ENCODE measurements at regions of chr19 and their contacts with region 1.

Region 1: DNA sequence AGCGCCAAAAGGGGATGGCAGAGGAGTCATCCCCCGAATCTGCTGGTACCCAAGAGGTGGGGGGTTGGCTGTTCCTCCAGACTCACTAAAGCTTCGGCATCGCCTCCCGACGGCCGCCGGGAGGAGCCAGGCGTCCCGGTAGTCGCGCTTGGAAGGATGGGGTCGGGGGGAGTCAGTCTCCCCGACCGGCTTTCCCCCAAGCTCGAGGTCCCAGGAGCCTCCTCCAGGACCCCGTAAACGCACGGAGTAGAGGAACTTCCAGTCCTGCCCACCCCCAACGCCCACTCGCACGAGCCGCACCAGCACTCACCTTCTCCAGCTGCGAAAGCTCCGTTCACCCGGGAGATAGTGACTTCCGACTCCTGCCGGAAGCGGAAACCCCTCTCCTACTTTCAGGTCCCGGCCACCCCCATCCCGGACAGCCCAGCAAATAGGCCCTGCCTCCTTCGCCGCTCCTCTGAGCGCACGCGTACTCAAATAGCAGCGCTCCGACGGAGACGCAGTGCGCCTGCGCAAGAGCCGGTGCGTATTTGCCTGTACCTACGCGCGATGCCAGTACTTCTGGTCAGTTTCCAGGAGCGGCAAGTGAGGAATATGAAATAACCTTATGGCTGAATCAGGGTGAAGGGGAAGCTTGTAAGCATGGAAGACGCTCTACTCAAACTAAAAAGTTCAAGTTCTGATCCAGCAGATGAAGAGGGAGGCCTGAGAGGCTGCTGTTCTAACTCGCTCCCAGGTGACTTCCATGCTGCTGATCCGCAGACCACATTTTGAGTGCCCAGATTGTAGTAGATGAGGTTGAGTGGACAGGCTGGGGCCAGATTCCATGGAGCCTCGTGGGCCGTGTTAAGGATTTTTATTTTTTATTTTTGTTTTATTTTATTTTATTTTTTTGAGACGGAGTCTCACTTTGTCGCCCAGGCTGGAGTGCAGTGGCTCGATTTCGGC is at the start of gene ELOF1:
- DNase-seq: peak; percentile 90 to 97 (median 94)
- ATAC-seq: peak; percentile 97
- H3K4me3 ChIP-seq: peak within 1 kb of the TSS; percentile 94
- H3K4me3 Mint-ChIP-seq: peak within 1 kb of the TSS; percentile 89 to 99 (median 96)
- H3K27ac ChIP-seq: peak within 1 kb of the TSS; percentile 82
- H3K27ac Mint-ChIP-seq: peak within 1 kb of the TSS; percentile 84 to 98 (median 95)
- H3K4me1 ChIP-seq: peaks cover 16 to 19% of the 10 kb centered on the region in 2 donors
- H3K4me1 Mint-ChIP-seq: peaks cover 34 to 58% (median 45%) of the 10 kb centered on the region in 7 donors
- H3K27me3 ChIP-seq: no peaks in the 10 kb centered on the region
- H3K27me3 Mint-ChIP-seq: no peaks in the 10 kb centered on the region
- total RNA-seq, gene ELOF1: 34.0 to 59.8 (median 41.9) TPM

Region 2: DNA sequence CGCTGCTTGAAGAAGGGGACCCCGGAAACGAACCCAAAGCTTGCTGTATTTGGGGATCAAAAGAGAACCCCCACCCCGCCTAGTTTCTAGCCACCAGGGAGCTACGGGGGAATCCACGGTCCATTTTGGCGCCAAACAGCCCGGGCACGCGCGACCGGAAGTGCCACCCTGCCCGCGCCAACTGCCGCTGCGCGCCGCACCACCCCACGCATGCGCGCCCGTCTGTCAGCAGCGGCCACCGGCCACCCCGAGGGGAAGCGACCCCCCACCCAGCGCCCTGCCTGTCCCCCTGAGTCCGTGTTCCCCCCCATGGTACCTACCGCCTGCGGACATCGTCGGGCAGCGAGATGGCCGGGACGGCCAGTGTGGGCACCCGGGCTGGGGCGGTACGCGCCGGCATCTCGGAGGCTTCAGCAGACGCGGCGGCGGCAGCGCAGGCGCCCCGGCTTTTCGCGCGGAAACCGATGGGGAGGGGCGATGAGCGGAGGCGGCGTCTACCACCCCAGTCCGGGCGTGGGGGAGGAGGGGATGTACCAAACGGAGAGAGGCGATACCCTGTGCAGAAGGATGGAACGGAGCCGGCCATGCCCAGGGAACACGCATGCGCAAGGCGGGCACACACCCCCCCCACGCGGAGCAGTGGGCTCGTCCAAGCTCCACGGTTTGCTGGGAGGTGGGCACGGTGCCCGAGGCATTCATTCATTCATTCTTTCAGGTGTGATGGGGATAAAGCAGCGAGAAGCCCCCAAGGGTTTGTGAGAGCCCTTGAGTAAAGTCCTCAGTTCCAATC is 1364.5 kb before region 1 on chr19 and contains the start of gene DNMT1:
- CTCF ChIA-PET with region 1: no interaction called
- POLR2A ChIA-PET with region 1: no interaction called
- intact Hi-C with region 1: loop called in 1 of 2 experiments (anchors 5 kb)
- DNase-seq: peak; percentile 87 to 98 (median 93)
- ATAC-seq: peak; percentile 99
- H3K4me3 ChIP-seq: peak within 1 kb of the TSS; percentile 88
- H3K4me3 Mint-ChIP-seq: peak within 1 kb of the TSS; percentile 87 to 98 (median 95)
- H3K27ac ChIP-seq: peak within 1 kb of the TSS; percentile 81
- H3K27ac Mint-ChIP-seq: peak within 1 kb of the TSS; percentile 82 to 96 (median 92)
- H3K4me1 ChIP-seq: peaks cover 7 to 20% of the 10 kb centered on the region in 2 donors
- H3K4me1 Mint-ChIP-seq: peaks cover 14 to 48% (median 40%) of the 10 kb centered on the region in 7 donors
- H3K27me3 ChIP-seq: no peaks in the 10 kb centered on the region
- H3K27me3 Mint-ChIP-seq: no peaks in the 10 kb centered on the region
- total RNA-seq, gene DNMT1: 175 to 334 (median 194) TPM

Region 3: DNA sequence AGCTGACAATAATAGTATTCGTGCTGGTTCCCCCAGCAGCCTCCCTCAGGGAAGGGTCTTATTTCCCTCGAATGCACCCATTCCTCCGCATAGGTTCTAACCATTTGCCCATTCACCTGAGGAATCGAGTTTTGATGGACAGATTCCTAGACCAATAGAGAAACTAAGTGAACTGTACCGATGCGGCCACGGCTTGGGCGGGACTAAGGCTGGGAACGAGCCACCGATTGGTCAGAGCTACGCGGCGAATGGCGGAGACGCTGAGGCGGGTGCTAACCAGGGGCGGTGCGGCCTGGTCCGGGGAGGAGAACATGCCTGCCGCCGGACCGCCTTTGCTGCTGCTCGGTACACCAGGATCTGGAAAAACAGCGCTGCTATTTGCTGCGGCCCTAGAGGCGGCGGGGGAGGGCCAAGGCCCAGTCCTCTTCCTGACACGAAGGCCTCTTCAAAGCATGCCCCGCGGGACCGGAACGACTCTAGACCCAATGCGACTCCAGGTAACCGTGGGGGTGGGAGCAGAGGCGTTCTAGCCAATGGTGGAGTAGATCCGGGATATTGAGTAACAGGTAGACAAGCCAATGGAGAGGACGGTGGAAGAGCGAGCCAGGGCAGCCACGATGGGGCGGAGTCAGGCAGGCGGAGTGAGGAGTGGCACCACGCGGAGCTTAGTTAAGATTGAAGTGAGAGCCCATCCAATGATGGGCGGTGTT is 184.6 kb before region 1 on chr19 and contains the start of gene SWSAP1:
- CTCF ChIA-PET with region 1: no interaction called
- POLR2A ChIA-PET with region 1: interaction called, 5 read pairs
- intact Hi-C with region 1: loop called in 1 of 2 experiments (anchors 1 kb)
- DNase-seq: peak; percentile 87 to 99 (median 99)
- ATAC-seq: peak; percentile 94
- H3K4me3 ChIP-seq: peak within 1 kb of the TSS; percentile 92
- H3K4me3 Mint-ChIP-seq: peak within 1 kb of the TSS in 3 of 10 donors; percentile 31 to 56 (median 45)
- H3K27ac ChIP-seq: peak within 1 kb of the TSS; percentile 92
- H3K27ac Mint-ChIP-seq: peak within 1 kb of the TSS in 1 of 9 donors; percentile 22
- H3K4me1 ChIP-seq: peaks cover 21 to 30% of the 10 kb centered on the region in 2 donors
- H3K4me1 Mint-ChIP-seq: peaks cover 12 to 40% (median 28%) of the 10 kb centered on the region in 7 donors
- H3K27me3 ChIP-seq: no peaks in the 10 kb centered on the region
- H3K27me3 Mint-ChIP-seq: no peaks in the 10 kb centered on the region
- total RNA-seq, gene SWSAP1: 3.4 to 4.2 (median 4.0) TPM

Region 4: DNA sequence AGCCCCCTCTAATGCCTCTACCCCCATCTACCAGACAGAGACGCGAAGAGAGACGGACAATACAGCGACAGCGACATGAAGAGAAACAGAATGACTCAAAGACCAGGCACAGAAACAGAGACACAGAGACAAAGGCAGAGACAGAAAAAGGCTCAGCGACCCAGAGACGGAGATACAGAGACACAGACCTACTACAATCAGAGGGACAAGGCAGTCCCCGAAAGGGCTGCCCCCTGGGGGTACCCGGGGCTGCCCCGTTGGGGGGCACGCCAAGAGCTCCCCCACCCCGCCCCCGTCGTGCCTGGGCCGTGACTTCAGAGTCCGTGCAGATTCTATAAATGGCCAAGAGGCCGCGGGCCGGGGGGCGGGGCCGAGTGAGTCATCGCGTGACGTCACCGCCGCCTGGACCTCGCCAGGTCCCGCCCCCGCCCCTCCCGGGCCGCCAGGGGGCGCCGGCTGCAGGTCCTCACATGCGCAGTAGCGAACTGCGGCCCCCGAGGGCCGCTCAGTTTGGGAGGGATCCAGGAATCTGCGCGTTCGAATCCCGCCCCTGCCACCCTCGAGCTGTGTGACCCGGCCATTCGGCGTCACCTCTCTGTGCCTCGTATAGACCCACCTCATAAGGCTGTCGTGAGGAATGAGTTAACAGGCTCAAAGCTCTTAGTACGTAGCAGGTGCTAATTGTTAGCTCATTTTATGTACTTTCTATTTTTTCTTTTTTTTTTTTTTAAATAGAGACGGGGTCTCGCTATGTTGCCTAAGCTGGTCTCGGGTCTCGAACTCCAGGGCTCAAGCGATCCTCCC is 23.2 kb before region 1 on chr19:
- CTCF ChIA-PET with region 1: interaction called, 5 read pairs
- POLR2A ChIA-PET with region 1: interaction called, 3 read pairs
- intact Hi-C with region 1: loop called (anchors 1 kb)
- DNase-seq: peak; percentile 59 to 95 (median 68)
- ATAC-seq: peak; percentile 95
- H3K4me3 ChIP-seq: peak overlapping the region; percentile 52
- H3K4me3 Mint-ChIP-seq: peak overlapping the region; percentile 59 to 88 (median 74)
- H3K27ac ChIP-seq: peak overlapping the region; percentile 43
- H3K27ac Mint-ChIP-seq: peak overlapping the region in 8 of 9 donors; percentile 2 to 88 (median 60)
- H3K4me1 ChIP-seq: peaks cover 5% of the 10 kb centered on the region in 2 donors
- H3K4me1 Mint-ChIP-seq: peaks cover 12 to 22% (median 16%) of the 10 kb centered on the region in 7 donors
- H3K27me3 ChIP-seq: peaks cover 0 to 3% of the 10 kb centered on the region in 2 donors
- H3K27me3 Mint-ChIP-seq: peaks cover 11 to 36% (median 16%) of the 10 kb centered on the region in 5 donors

Region 5: DNA sequence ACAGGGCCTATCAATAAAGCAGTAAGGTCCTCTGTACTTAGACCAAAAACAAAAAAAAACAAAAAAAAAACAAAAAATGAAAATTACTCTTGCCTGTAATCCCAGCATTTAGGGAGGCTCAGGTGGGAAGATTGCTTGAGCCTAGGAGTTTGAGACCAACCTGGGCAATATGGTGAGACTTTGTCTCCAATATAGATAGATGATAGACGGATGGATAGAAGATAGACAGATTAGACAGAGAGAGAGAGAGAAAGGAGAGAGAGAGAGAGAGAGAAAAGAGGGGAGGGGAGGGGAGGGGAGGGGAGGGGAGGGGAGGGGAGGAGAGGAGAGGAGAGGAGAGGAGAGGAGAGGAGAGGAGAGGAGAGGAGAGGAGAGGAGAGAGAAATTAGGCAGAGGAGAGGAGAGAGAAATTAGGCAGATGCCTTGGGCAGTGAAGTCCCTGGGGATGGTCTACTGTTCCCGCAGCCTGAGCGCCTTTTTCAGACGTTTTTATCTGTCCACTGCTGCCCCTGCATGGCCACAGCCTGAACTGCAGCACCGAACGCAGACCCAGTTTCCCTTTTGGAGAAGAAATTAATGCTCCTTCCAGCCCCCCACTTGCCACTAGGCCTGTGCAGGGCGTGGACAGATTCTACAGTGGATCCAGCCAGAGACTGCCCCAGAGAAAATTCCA is 28.3 kb after region 1 on chr19:
- CTCF ChIA-PET with region 1: interaction called, 9 read pairs
- POLR2A ChIA-PET with region 1: interaction called, 33 read pairs
- intact Hi-C with region 1: loop called (anchors 1 kb)
- DNase-seq: peak; percentile 58 to 80 (median 66)
- ATAC-seq: peak; percentile 95
- H3K4me3 ChIP-seq: no peak overlapping the region
- H3K4me3 Mint-ChIP-seq: no peak overlapping the region
- H3K27ac ChIP-seq: no peak overlapping the region
- H3K27ac Mint-ChIP-seq: peak overlapping the region in 1 of 9 donors; percentile 36
- H3K4me1 ChIP-seq: no peaks in the 10 kb centered on the region
- H3K4me1 Mint-ChIP-seq: peaks cover 0 to 16% (median 7%) of the 10 kb centered on the region in 7 donors
- H3K27me3 ChIP-seq: no peaks in the 10 kb centered on the region
- H3K27me3 Mint-ChIP-seq: no peaks in the 10 kb centered on the region

Region 6: DNA sequence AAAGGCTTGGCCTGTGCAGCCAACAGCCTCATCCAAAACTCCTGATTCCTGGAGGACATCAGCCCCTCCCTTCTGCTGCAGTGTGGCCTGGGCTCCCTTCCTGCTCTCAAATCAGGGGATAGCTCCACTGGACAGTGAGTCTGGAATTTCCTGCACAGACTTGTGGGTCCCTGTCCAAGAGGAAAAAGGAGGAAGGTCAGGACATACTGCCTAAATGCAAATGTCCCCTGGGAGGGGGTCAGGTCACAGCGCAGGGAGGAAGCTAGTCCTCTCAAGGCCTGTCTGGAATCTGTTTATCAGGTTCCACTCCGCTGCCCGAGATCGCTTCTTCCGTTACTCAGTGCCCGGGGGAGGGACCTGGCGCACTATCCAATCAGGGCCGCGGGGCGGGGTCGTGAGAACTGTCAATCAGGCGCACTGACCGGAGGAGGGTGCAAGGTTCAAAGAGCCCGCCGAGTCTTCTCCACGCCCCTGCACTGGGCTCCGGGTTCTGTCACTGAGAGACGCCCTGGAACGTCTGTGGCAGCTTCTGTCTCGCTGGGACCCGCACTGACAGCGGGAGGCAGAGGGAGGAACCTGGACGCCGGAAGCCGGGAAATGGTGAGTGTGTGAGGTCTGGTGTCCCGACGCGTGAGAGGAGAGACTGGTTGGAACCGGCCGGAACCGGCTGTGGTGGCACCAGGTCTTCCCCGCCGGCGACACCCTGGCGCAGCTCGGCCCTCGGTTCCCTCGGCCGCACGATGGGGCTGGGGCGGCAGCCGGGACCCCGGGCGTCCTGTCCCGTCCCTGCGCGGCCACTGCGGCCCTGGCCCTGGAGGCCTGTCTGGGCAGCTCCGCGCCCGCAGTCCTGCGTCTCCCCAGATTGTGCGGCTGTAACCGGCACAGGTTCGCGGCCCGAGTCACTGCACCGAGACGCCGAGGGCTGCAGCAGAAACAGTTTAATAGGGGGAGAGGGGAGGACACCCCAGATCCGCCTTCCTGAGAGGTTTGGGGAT is 207.7 kb after region 1 on chr19 and contains the start of gene ZNF441:
- CTCF ChIA-PET with region 1: no interaction called
- POLR2A ChIA-PET with region 1: interaction called, 5 read pairs
- intact Hi-C with region 1: loop called in 1 of 2 experiments (anchors 1 kb)
- DNase-seq: peak; percentile 76 to 89 (median 87)
- ATAC-seq: peak; percentile 98
- H3K4me3 ChIP-seq: peak within 1 kb of the TSS; percentile 70
- H3K4me3 Mint-ChIP-seq: peak within 1 kb of the TSS; percentile 94 to 99 (median 96)
- H3K27ac ChIP-seq: peak within 1 kb of the TSS; percentile 79
- H3K27ac Mint-ChIP-seq: peak within 1 kb of the TSS; percentile 90 to 98 (median 95)
- H3K4me1 ChIP-seq: peaks cover 4 to 7% of the 10 kb centered on the region in 2 donors
- H3K4me1 Mint-ChIP-seq: peaks cover 15 to 31% (median 27%) of the 10 kb centered on the region in 7 donors
- H3K27me3 ChIP-seq: no peaks in the 10 kb centered on the region
- H3K27me3 Mint-ChIP-seq: peaks cover 0 to 23% (median 5%) of the 10 kb centered on the region in 5 donors
- total RNA-seq, gene ZNF441: 3.9 to 23.8 (median 7.1) TPM